HEK293 (cell line): ENCODE measurements at regions of chr7 and their contacts with region 1.

Region 1: DNA sequence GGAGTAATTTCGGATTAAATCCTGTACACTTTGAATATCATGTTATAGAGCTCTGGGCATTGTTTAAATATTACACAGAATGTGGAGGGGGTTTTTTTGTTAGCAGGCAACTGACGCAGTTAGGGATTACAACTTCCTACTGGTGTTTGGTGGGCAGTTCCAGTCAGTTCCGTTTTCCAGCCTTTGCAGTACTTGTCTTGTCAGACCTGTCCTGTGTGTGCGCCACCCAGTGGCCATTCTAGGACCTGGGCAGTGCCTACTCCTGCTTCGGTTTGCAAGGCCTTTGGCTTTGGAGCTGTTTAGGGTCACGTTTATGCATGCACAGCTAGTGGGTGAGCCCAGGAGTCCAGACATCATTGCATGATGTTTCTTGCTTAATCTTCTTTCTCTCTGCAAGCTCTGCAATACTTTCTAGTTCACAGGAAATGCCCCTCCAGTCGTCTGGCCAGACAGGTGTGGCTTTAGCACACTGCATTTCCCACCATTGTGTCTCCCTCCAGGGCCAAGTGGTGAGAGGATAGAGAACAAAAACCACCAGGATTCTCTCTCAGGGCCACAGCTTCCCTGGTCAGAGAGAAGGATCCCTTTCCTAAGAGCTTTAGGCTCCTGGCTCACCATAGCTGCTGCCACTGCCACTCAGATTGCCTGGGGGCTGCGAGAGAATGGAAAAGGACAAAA is 96.5 kb upstream of the TARP start:
- H3K4me3 ChIP-seq: no peak overlapping the region
- H3K27ac ChIP-seq: no peak overlapping the region
- H3K4me1 ChIP-seq: no peaks in the 10 kb centered on the region
- CTCF ChIP-seq: no peak

Region 2: GRCh38 chr7:38351601-38352000 is 18.4 kb before region 1 on chr7:
- CTCF ChIA-PET with region 1: interaction called, 11 read pairs
- POLR2A ChIA-PET with region 1: no interaction called
- H3K4me3 ChIP-seq: no peak overlapping the region
- H3K27ac ChIP-seq: no peak overlapping the region
- H3K4me1 ChIP-seq: no peaks in the 10 kb centered on the region
- CTCF ChIP-seq: no peak

Region 3: DNA sequence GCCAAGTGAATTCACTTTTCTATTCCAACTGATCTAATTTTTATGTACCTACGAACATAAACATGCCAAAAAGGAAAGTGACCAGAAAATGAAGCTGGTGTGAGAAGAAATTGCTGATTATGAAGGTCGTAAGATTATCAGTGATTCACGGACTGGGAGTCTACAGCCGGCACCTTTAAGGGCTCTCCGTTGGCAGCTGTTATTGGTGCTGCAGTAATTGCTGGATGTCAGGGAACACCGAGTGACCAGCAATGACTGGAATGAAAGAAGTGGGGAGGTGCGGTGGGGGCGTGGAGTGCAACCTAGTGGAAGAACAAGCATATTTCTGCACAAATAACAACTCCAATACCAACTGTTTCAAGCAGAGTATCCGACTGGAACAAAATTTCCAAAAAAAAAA is 13.3 kb after region 1 on chr7:
- CTCF ChIA-PET with region 1: interaction called, 53 read pairs
- POLR2A ChIA-PET with region 1: no interaction called
- H3K4me3 ChIP-seq: no peak overlapping the region
- H3K27ac ChIP-seq: no peak overlapping the region
- H3K4me1 ChIP-seq: no peaks in the 10 kb centered on the region
- CTCF ChIP-seq: no peak

Region 4: GRCh38 chr7:38574086-38574485 is 204.1 kb after region 1 on chr7:
- CTCF ChIA-PET with region 1: no interaction called
- POLR2A ChIA-PET with region 1: no interaction called
- H3K4me3 ChIP-seq: no peak overlapping the region
- H3K27ac ChIP-seq: no peak overlapping the region
- H3K4me1 ChIP-seq: no peaks in the 10 kb centered on the region
- CTCF ChIP-seq: no peak